ENCODE measurements at regions of chr17 and their contacts with region 1.

Region 1: GRCh38 chr17:29369831-29370735 is 20.1 kb upstream of the TAOK1 start:
- DNase-seq: peak; percentile 51
- H3K4me3 Mint-ChIP-seq: no peak overlapping the region
- H3K27ac Mint-ChIP-seq: no peak overlapping the region
- H3K4me1 Mint-ChIP-seq: no peaks in the 10 kb centered on the region
- H3K27me3 Mint-ChIP-seq: no peaks in the 10 kb centered on the region

Region 2: GRCh38 chr17:29322363-29322762 is 47.7 kb before region 1 on chr17:
- CTCF ChIA-PET with region 1: no interaction called
- POLR2A ChIA-PET with region 1: no interaction called
- DNase-seq: no peak
- H3K4me3 Mint-ChIP-seq: no peak overlapping the region
- H3K27ac Mint-ChIP-seq: no peak overlapping the region
- H3K4me1 Mint-ChIP-seq: no peaks in the 10 kb centered on the region
- H3K27me3 Mint-ChIP-seq: peaks cover 2% of the 10 kb centered on the region

Region 3: DNA sequence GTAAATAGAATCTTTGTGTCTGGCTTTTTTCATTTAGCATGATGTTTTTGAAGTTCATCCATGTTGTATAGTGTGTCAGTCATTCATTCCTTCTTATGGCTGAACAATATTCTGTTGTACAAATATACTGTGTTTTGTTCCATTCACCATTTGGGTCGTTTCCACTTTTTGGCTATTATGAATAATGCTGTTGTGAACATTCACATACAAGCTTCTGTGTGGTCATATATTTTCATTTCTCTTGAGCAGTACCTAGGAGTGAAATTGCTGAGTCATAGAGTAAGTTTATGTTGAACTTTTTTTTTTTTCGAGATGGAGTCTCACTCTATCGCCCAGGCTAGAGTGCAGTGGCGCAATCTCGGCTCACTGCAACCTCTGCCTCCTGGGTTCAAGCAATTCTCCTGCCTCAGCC is 12.3 kb before region 1 on chr17:
- CTCF ChIA-PET with region 1: interaction called, 10 read pairs
- POLR2A ChIA-PET with region 1: interaction called, 3 read pairs
- DNase-seq: no peak
- H3K4me3 Mint-ChIP-seq: no peak overlapping the region
- H3K27ac Mint-ChIP-seq: no peak overlapping the region
- H3K4me1 Mint-ChIP-seq: peaks cover 7% of the 10 kb centered on the region
- H3K27me3 Mint-ChIP-seq: no peaks in the 10 kb centered on the region

Region 4: DNA sequence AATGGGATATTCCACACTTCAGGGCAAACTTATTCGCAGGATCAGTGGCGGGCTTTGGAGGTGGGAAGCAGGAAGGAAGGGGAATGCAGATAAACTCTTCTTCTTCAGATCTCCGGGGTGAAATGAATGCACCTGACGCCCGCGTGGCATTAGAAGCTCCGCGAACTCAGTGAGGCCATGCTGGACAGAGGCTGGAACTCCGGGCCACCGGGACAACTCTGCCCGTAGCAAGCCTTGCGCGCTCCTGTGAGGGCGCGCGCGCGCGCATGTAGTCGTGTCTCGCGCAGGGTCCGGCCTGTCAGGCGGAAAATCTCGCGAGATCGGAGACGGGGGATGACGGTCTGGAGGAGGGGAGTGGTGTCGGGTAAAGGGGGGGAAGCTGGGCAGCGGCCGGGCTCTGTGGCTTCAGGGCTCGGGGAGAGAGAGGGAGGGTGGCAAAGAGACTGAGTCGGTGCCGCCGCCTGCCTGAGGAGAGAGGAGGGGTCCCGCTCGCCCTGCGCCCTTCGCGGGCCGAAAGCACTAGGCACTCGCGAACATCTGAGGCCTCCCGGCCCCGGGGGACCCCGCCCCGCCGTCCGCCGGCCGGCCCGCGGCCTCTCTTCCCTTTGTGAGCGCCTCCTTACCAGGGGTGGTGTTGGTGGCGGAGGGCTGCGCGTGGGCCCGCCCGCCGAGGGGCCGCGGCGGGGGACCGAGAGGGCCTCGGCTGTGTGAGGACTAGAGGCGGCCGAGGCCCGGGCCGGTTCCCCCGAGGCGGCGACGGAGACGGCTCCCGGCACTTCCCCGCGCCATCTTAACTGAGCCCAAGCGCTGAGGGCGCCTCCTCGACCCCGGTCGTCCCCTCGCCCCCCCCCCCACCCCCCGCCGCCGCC is 20.1 kb after region 1 on chr17 and contains the start of gene TAOK1:
- CTCF ChIA-PET with region 1: interaction called, 47 read pairs
- POLR2A ChIA-PET with region 1: interaction called, 6 read pairs
- DNase-seq: peak; percentile 98
- H3K4me3 Mint-ChIP-seq: peak within 1 kb of the TSS; percentile 97
- H3K27ac Mint-ChIP-seq: peak within 1 kb of the TSS; percentile 87
- H3K4me1 Mint-ChIP-seq: peaks cover 41% of the 10 kb centered on the region
- H3K27me3 Mint-ChIP-seq: no peaks in the 10 kb centered on the region
- total RNA-seq, gene TAOK1: 50.0 to 51.0 TPM

Region 5: GRCh38 chr17:29533976-29534375 is 163.9 kb after region 1 on chr17:
- CTCF ChIA-PET with region 1: interaction called, 50 read pairs
- POLR2A ChIA-PET with region 1: interaction called, 3 read pairs
- DNase-seq: no peak
- H3K4me3 Mint-ChIP-seq: no peak overlapping the region
- H3K27ac Mint-ChIP-seq: no peak overlapping the region
- H3K4me1 Mint-ChIP-seq: no peaks in the 10 kb centered on the region
- H3K27me3 Mint-ChIP-seq: no peaks in the 10 kb centered on the region

Region 6: DNA sequence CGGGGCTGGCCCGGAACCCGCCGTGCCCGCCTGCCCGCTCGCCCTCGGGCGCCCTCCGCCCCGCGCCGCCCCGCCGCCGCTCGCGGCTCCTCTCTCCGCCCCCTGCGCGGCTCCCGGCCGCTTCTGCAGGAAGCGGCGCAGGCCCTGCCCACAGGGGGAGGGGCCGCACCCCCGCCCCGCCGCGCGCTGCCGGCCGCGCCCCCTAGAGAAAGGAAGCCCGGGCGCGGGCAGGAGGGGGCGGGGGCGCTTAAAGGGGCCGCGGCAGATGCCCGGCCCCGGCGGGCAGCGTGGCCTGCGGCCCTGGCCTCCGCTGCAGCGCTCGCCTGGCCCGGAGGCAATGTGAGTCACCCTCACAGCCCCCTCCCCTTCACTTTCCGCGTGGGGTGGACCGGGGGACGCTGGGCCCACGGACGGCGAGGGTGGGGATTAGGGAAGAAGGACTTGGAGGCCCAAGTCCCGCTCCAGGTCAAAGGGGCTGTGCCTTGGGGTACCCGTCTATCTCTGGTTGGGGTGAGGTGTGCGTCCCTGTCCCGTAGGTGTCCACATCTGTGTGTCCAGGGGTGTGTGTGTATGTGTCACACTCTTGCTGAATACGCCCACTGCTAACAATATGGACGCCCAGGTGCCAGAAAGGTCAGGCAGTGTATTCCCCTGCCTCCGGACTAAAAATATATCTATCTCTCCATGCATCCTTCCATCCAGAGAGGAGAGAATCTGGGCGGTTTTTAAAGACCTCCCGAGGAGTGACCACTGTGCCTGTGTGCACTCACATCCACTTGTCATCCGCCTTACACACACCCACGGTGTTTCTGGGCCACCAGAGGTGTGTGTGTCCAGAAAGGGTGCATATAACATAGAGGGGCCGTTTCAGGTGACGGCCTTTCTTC is 219.7 kb after region 1 on chr17 and contains the start of gene GIT1:
- CTCF ChIA-PET with region 1: interaction called, 22 read pairs
- POLR2A ChIA-PET with region 1: no interaction called
- DNase-seq: peak; percentile 88
- H3K4me3 Mint-ChIP-seq: peak within 1 kb of the TSS; percentile 97
- H3K27ac Mint-ChIP-seq: peak within 1 kb of the TSS; percentile 86
- H3K4me1 Mint-ChIP-seq: peaks cover 72% of the 10 kb centered on the region
- H3K27me3 Mint-ChIP-seq: no peaks in the 10 kb centered on the region
- total RNA-seq, gene GIT1: 76.6 to 80.4 TPM

Measured in activated CD4-positive, alpha-beta memory T cell treated with anti-CD3 and anti-CD28 coated beads, Interleukin-2, amount 10 ng/mL, durations not matched to agents 7 days and 5 days (primary cell).